Posterior vena cava (tissue), 2 donors: ENCODE measurements at regions of chr15 and their contacts with region 1.

Region 1: GRCh38 chr15:59688841-59689625 is at the start of gene BNIP2:
- DNase-seq: peak; percentile 100
- total RNA-seq, gene BNIP2: 81.6 to 110 TPM

Region 2: GRCh38 chr15:59657635-59658148 is 31.3 kb before region 1 on chr15:
- intact Hi-C with region 1: no loop called
- DNase-seq: no peak

Region 3: DNA sequence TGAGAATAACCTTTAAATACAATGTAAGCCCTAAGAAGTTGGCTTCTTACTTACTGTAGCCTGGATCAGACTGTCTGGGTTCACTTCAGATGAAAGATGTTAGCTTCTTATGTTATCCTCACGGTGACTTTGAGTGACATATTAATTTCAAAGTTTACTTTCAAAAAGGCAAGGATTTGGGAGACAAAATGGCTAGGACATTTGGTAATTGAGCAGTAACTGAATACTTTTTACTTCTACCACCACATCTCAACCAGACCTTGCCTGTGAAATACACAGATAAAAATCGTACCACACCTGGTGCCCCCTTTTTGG is 36.1 kb after region 1 on chr15:
- intact Hi-C with region 1: loop called in 1 of 2 experiments (anchors 2 kb)
- DNase-seq: no peak

Region 4: DNA sequence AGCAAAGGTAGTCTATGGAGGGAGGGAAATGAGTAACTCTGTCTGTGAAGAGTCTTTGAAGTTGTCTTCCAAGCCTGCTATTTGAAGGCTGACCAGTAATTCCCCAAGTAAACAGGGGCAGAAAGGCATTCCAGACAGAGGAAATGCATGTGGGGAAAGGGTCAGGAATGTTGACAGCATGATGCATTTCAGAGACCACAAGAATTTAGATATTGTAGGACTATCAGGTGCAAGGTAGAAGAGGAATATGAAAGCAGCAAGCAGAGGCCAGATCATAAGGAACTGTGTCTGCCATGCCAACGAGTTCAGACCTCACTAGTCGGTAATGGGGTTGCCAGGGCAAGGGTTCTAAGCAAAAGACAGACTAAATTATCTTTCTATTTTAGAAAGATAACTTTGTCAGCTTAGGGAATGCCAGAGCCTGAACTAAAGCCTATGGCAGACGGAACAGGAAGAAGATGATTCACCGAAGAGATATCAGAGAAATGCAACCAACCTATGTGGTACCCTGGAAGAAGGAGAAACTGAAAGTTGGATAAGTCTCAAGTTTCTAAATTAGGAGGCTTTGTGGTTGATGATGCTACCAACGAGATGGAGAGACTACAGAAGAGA is 1867.1 kb after region 1 on chr15:
- intact Hi-C with region 1: no loop called
- DNase-seq: no peak